Cardiac septum (tissue), 1 donor: ENCODE measurements at regions of chr5 and their contacts with region 1.

Region 1: GRCh38 chr5:71757590-71758543 is 38.8 kb downstream of the CARTPT start:
- DNase-seq: no peak

Region 2: DNA sequence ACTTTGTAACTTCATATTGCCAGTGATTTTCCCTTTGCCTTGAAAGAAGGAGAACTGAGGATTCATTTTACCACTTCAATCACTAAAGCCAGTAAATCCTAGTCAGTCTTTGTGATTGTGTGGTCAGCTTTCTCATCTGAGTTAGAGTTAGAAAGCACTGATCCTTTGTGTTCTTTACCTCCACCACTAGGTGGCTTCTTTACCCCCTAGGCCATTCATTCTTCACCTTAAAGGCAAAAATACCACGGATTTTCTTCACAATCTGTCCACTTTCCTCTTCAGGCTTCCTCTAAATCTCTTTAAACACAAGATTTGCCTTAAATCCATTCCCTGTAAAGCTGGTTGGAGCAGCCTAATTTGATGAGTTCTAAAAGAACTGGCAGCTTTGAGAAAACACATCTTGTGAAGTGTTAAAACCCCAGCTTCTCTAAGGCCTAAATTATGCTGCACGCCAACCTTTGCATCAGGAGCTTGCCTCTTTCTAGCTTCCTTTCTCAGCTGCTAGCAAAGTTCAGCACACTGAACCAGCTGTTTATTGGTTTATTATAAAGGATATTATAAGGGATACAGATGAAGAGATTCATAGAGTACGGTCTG is 282.0 kb before region 1 on chr5:
- intact Hi-C with region 1: loop called (anchors 5 kb)
- DNase-seq: no peak

Region 3: GRCh38 chr5:71573592-71573991 is 184.3 kb before region 1 on chr5:
- intact Hi-C with region 1: loop called (anchors 5 kb)
- DNase-seq: no peak

Region 4: GRCh38 chr5:71830681-71831539 is 73.0 kb after region 1 on chr5:
- intact Hi-C with region 1: no loop called
- DNase-seq: peak; percentile 86